Activated CD4-positive, alpha-beta T cell treated with anti-CD3 and anti-CD28 coated beads, Interleukin-2, amount 10 ng/mL, durations not matched to agents 7 days and 5 days (primary cell): ENCODE measurements at regions of chr6 and their contacts with region 1.

Region 1: GRCh38 chr6:154187714-154188113 is 148.7 kb downstream of the OPRM1 start:
- DNase-seq: no peak
- H3K4me3 Mint-ChIP-seq: no peak overlapping the region
- H3K27ac Mint-ChIP-seq: no peak overlapping the region
- H3K4me1 Mint-ChIP-seq: peaks cover 2% of the 10 kb centered on the region
- H3K27me3 Mint-ChIP-seq: no peaks in the 10 kb centered on the region

Region 2: GRCh38 chr6:154249499-154250298 is 62.0 kb after region 1 on chr6:
- CTCF ChIA-PET with region 1: no interaction called
- POLR2A ChIA-PET with region 1: interaction called, 13 read pairs
- DNase-seq: peak; percentile 61
- H3K4me3 Mint-ChIP-seq: peak overlapping the region; percentile 60
- H3K27ac Mint-ChIP-seq: peak overlapping the region; percentile 96
- H3K4me1 Mint-ChIP-seq: peaks cover 73% of the 10 kb centered on the region
- H3K27me3 Mint-ChIP-seq: no peaks in the 10 kb centered on the region